Aorta (tissue), 5 donors: ENCODE measurements at regions of chr1 and their contacts with region 1.

Region 1: GRCh38 chr1:19882111-19883071 is at the start of gene OTUD3:
- DNase-seq: peak; percentile 97
- ATAC-seq: peak; percentile 98
- H3K4me3 ChIP-seq: peak within 1 kb of the TSS; percentile 50 to 87
- H3K27ac ChIP-seq: peak within 1 kb of the TSS; percentile 30 to 66
- H3K4me1 ChIP-seq: peaks cover 0 to 4% of the 10 kb centered on the region in 2 donors
- H3K27me3 ChIP-seq: no peaks in the 10 kb centered on the region
- total RNA-seq, gene OTUD3: 11.5 to 19.5 TPM

Region 2: GRCh38 chr1:19563324-19564097 is 318.9 kb before region 1 on chr1:
- intact Hi-C with region 1: loop called in 1 of 2 experiments (anchors 5 kb)
- DNase-seq: peak; percentile 76 to 83
- ATAC-seq: peak; percentile 89
- H3K4me3 ChIP-seq: no peak overlapping the region
- H3K27ac ChIP-seq: peak overlapping the region; percentile 69 to 83
- H3K4me1 ChIP-seq: no peaks in the 10 kb centered on the region
- H3K27me3 ChIP-seq: no peaks in the 10 kb centered on the region

Region 3: GRCh38 chr1:19949016-19949415 is 66.6 kb after region 1 on chr1:
- intact Hi-C with region 1: no loop called
- DNase-seq: no peak
- ATAC-seq: no peak
- H3K4me3 ChIP-seq: no peak overlapping the region
- H3K27ac ChIP-seq: no peak overlapping the region
- H3K4me1 ChIP-seq: no peaks in the 10 kb centered on the region
- H3K27me3 ChIP-seq: peaks cover 0 to 2% of the 10 kb centered on the region in 2 donors